HepG2 (cell line): ENCODE measurements at regions of chr2 and their contacts with region 1.

Region 1: DNA sequence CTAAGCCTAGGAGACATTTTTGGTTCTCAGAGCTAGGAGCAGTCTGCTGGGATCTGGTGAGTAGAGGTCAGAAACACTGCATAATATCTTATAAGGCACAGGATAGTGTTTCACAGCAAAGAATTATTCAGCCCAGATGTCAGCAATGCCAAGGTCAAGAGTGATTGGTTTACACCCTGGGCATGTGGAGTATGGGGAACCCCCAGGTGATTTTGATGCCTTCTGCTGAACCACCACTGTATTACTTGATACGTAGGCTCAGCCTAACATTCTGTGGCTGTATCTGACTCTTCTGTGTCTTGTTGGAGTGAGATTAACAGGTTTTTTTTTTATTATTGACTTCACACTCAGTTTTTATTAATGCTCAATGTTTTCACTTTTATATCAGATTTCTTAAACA is 6.0 kb downstream of the DDX18 start:
- DNase-seq: no peak
- ATAC-seq: no peak
- H3K4me3 ChIP-seq: no peak overlapping the region
- H3K27ac ChIP-seq: no peak overlapping the region
- H3K4me1 ChIP-seq: peaks cover 31% of the 10 kb centered on the region
- H3K27me3 ChIP-seq: no peaks in the 10 kb centered on the region
- CTCF ChIP-seq: no peak
- EP300 ChIP-seq: no peak
- POLR2A ChIP-seq: no peak
- RAD21 ChIP-seq: no peak

Region 2: DNA sequence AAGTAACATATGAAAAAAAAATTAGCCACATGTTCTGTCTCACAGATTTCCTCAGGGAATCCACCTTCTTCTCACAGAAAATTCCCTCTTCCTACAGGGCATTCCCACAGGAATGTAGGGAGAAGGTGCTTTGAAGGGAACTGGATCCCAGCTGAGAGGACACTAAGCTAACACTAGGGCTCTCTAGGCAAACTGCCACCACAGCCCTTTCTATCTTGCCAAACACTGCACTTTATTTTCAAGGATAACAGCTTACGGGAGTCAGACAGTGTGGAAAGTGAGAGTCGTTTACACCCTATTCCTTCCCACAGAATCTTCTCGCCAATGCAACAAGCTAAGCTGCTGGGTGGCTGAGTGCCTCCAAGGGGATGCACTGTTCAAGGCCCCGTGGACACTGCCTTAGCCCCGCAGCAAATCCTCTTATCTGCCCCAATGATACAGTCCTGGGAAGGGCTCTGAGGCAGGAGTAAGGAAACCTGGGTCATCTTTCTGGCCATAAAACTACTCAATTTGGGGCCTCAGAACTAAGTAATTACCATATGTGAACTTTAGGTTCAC is 116.5 kb after region 1 on chr2:
- CTCF ChIA-PET with region 1: no interaction called
- POLR2A ChIA-PET with region 1: no interaction called
- in situ Hi-C with region 1: loop called (anchors 10 kb)
- intact Hi-C with region 1: no loop called
- DNase-seq: no peak
- ATAC-seq: no peak
- H3K4me3 ChIP-seq: no peak overlapping the region
- H3K27ac ChIP-seq: no peak overlapping the region
- H3K4me1 ChIP-seq: peaks cover 29% of the 10 kb centered on the region
- H3K27me3 ChIP-seq: no peaks in the 10 kb centered on the region
- CTCF ChIP-seq: no peak
- EP300 ChIP-seq: no peak
- POLR2A ChIP-seq: no peak
- RAD21 ChIP-seq: no peak